ENCODE measurements at regions of chr7 and their contacts with region 1.

Region 1: GRCh38 chr7:4830176-4830575 is 31.7 kb downstream of the PAPOLB start:
- DNase-seq: peak; percentile 95
- H3K4me3 ChIP-seq: no peak overlapping the region; a peak in 1 of 4 replicates
- H3K27ac ChIP-seq: no peak overlapping the region; a peak in 1 of 4 replicates
- H3K4me1 ChIP-seq: peaks cover 0 to 5% of the 10 kb centered on the region in 2 experiments; a peak in 1 of 4 replicates
- H3K27me3 ChIP-seq: no peaks in the 10 kb centered on the region
- CTCF ChIP-seq: peak; percentile 72
- EP300 ChIP-seq: no peak; a peak in 1 of 4 replicates
- RAD21 ChIP-seq: peak; percentile 98

Region 2: GRCh38 chr7:4809091-4809591 is 21.0 kb before region 1 on chr7:
- CTCF ChIA-PET with region 1: interaction called, 14 read pairs
- POLR2A ChIA-PET with region 1: no interaction called
- DNase-seq: no peak
- H3K4me3 ChIP-seq: no peak overlapping the region
- H3K27ac ChIP-seq: no peak overlapping the region
- H3K4me1 ChIP-seq: no peaks in the 10 kb centered on the region
- H3K27me3 ChIP-seq: no peaks in the 10 kb centered on the region
- CTCF ChIP-seq: no peak
- EP300 ChIP-seq: no peak
- RAD21 ChIP-seq: no peak

Region 3: DNA sequence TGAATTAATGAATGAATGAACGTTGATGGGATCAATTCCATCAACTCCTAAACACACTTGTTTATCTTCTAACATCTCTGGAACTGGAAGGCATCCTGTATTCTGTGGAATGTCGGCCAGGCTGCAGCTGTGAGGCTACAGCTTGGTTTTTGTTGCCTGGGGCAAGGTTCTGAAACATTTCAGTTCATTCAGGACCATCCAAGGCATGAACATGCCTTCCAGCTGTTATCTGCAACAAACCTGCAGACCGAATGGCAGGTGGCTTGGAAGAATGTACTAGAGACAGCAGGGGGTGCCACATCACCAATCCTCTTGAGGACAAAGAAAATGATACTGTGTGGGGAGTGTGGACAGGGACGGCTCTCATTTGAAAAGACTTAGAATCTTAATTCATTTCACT is 19.2 kb after region 1 on chr7:
- CTCF ChIA-PET with region 1: interaction called, 198 read pairs
- POLR2A ChIA-PET with region 1: interaction called, 4 read pairs
- DNase-seq: peak; percentile 81
- H3K4me3 ChIP-seq: no peak overlapping the region
- H3K27ac ChIP-seq: peak overlapping the region in 1 of 2 experiments; percentile 5; a peak in 1 of 4 replicates
- H3K4me1 ChIP-seq: peaks cover 0 to 19% of the 10 kb centered on the region in 2 experiments; a peak in 2 of 4 replicates
- H3K27me3 ChIP-seq: no peaks in the 10 kb centered on the region
- CTCF ChIP-seq: peak; percentile 51
- EP300 ChIP-seq: peak in 1 of 2 experiments; percentile 45; a peak in 1 of 4 replicates
- RAD21 ChIP-seq: peak; percentile 95

Region 4: GRCh38 chr7:4871056-4871680 is 41.0 kb after region 1 on chr7:
- CTCF ChIA-PET with region 1: interaction called, 20 read pairs
- POLR2A ChIA-PET with region 1: no interaction called
- DNase-seq: peak; percentile 57
- H3K4me3 ChIP-seq: no peak overlapping the region
- H3K27ac ChIP-seq: peak overlapping the region in 1 of 2 experiments; percentile 85; a peak in 2 of 4 replicates
- H3K4me1 ChIP-seq: peaks cover 0 to 36% of the 10 kb centered on the region in 2 experiments; a peak in 1 of 4 replicates
- H3K27me3 ChIP-seq: no peaks in the 10 kb centered on the region
- CTCF ChIP-seq: no peak
- EP300 ChIP-seq: no peak
- RAD21 ChIP-seq: no peak

Region 5: DNA sequence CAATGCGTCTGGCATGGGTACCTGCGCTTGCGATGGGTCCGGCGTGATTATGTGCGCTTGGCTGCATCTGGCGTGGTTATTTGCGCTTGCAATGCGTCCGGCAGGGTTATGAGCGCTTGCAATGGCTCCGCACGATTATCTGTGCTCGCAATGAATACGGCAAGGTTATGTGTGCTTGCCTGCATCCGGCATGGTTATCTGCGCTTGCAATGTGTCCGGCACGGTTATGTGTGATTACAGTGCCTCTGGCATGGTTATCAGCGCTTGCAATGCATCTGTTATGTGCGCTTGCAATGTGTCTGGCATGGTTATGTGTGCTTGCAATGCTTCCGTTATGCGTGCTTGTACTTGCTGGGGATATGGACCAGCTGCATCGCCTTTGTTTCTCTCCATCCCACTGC is 253.1 kb after region 1 on chr7:
- CTCF ChIA-PET with region 1: interaction called, 109 read pairs
- POLR2A ChIA-PET with region 1: no interaction called
- DNase-seq: peak; percentile 63
- H3K4me3 ChIP-seq: peak overlapping the region; percentile 9 to 35; a peak in 2 of 4 replicates
- H3K27ac ChIP-seq: no peak overlapping the region
- H3K4me1 ChIP-seq: peaks cover 0 to 10% of the 10 kb centered on the region in 2 experiments; a peak in 1 of 4 replicates
- H3K27me3 ChIP-seq: peaks cover 36% of the 10 kb centered on the region
- CTCF ChIP-seq: no peak
- EP300 ChIP-seq: no peak
- RAD21 ChIP-seq: peak; percentile 2; the same call in 1 of the 2 replicates

Measured in SK-N-SH (cell line).